Tibial artery (tissue), 4 donors: ENCODE measurements at regions of chr11 and their contacts with region 1.

Region 1: DNA sequence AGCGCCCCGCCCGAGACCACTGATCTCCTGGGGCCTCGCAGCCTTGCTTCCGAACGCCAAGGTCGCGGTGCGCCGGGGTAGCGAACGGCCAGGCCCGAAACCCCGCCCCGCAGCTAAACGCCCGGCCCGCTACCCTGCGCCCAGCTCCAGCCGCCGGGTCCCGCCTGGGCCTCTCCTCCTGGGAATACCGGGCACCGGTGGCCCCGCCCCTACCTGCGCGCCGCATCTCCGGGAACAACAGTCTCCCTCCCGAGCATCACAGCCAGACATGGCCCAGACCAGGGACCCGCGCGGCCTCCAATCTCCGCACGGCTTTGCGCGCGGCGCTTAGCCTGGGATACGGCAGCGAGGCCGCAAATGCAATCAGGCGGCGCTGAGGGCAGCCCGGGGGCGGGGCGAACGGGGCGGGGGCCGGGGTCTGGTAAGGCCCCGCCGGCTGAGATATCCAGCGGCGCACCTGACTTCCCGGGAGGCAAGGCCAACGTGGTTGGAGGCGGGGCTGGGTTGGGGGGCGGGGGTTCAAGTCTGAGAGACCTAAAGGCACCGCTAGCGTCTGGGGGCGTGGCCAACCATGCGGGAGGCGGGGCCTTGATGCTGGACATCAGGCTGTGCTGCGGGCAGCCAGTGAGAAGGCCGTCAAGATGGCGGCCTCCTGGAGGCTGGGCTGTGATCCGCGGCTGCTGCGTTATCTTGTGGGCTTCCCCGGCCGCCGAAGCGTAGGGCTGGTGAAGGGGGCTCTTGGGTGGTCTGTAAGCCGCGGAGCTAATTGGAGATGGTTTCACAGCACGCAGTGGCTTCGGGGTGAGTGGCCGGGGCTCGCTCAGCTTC is at the starts of genes APIP and PDHX:
- DNase-seq: peak; percentile 96 to 99
- H3K4me3 ChIP-seq: peak within 1 kb of the TSS; percentile 76 to 87
- H3K27ac ChIP-seq: peak within 1 kb of the TSS; percentile 93 to 97
- H3K4me1 ChIP-seq: peaks cover 0 to 28% (median 9%) of the 10 kb centered on the region in 4 donors
- H3K27me3 ChIP-seq: no peaks in the 10 kb centered on the region
- CTCF ChIP-seq: no peak

Region 2: GRCh38 chr11:33930317-33931021 is 985.8 kb before region 1 on chr11:
- intact Hi-C with region 1: no loop called
- DNase-seq: peak; percentile 66 to 68
- H3K4me3 ChIP-seq: no peak overlapping the region
- H3K27ac ChIP-seq: peak overlapping the region; percentile 37 to 63
- H3K4me1 ChIP-seq: peaks cover 0 to 21% (median 11%) of the 10 kb centered on the region in 4 donors
- H3K27me3 ChIP-seq: no peaks in the 10 kb centered on the region
- CTCF ChIP-seq: no peak

Region 3: GRCh38 chr11:35144136-35144741 is 228.0 kb after region 1 on chr11:
- intact Hi-C with region 1: loop called (anchors 5 kb)
- DNase-seq: no peak
- H3K4me3 ChIP-seq: no peak overlapping the region
- H3K27ac ChIP-seq: peak overlapping the region in 1 of 2 donors; percentile 88
- H3K4me1 ChIP-seq: peaks cover 0 to 83% (median 61%) of the 10 kb centered on the region in 4 donors
- H3K27me3 ChIP-seq: no peaks in the 10 kb centered on the region
- CTCF ChIP-seq: no peak

Region 4: DNA sequence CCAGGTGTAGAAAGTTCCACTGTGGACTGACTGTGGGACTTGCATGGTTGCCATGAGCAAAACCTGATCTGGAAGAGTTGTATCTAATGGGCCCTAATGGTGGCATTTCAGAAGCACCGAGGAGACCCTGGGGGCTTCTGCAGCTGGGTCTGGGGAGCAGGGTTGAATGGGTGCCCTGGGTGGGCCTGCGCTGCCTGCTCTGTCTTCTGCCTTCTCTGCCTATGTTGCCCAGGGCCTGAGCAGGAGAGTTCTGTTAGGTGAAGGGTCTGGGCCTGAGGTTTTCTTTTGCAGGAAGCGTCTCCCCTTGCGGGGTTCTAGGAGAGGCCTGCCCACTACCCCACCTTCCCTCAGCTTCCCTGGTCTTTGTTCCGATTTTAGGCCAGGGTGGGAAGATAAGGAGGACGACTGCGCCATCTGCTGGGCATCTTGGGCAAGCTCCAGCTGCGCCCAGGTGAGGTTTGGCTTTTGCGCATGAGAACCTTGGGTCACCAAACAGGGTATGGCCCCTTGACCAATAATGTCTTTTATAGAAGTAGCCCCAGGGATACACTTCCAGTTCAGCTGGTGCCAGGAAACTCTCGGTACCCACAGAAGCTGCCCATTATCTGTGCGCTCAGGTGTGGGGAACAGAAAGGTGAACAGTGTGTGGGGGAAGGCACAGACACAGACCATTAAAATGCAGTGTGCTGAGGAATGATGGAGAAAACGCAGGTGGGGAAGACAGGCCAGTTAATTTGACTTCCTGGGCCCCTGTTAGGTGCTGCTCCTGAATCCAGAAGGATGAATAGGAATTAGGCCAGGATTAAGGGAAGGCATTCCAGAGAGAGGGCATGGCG is 1349.8 kb after region 1 on chr11:
- intact Hi-C with region 1: loop called (anchors 10 kb)
- DNase-seq: peak in 1 of 2 donors; percentile 27
- H3K4me3 ChIP-seq: no peak overlapping the region
- H3K27ac ChIP-seq: no peak overlapping the region
- H3K4me1 ChIP-seq: peaks cover 0 to 3% (median 0%) of the 10 kb centered on the region in 4 donors
- H3K27me3 ChIP-seq: peaks cover 0 to 3% of the 10 kb centered on the region in 2 donors
- CTCF ChIP-seq: peak; percentile 75 to 76